Left cardiac atrium (tissue), 4 donors: ENCODE measurements at regions of chr21 and their contacts with region 1.

Region 1: DNA sequence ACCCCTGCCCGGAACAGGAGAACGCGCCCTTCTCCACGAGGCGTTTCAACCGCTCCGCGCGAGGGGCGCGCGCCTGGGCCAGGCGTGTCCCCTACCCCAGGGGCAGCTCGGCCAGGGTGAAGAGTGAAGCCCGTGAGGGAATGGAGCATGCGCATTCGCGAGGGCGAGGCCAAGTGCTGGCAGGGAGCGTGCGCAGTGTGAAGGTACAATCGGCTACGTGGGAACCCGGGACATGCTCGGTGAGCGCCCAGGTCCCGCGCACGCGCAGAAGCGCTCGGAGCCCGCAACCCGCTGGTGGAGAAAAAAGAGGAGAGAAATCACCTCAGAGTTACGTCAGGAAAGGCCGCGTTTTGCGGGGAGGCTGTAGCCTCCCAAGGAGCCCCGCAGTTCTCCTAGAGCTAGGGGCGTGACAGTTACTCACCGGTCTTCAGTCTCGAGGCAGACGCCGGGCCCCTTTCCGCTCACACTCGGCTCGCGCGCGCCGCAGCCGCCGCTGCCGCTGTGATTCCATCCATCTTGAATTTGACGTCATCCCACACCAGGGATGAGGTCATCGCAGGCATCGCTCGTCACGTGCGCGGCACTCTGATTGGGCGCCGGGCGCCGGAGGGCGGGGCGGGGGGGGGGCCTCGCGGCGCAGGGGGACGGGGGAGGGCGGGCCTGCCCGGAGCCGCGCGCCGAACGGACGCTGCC is at the start of gene ZBTB21:
- DNase-seq: peak; percentile 99
- ATAC-seq: peak; percentile 95 to 97
- total RNA-seq, gene ZBTB21: 5.7 to 14.7 TPM

Region 2: GRCh38 chr21:41885341-41886029 is 124.5 kb before region 1 on chr21:
- intact Hi-C with region 1: loop called in 1 of 2 experiments (anchors 10 kb)
- DNase-seq: no peak
- ATAC-seq: no peak

Region 3: DNA sequence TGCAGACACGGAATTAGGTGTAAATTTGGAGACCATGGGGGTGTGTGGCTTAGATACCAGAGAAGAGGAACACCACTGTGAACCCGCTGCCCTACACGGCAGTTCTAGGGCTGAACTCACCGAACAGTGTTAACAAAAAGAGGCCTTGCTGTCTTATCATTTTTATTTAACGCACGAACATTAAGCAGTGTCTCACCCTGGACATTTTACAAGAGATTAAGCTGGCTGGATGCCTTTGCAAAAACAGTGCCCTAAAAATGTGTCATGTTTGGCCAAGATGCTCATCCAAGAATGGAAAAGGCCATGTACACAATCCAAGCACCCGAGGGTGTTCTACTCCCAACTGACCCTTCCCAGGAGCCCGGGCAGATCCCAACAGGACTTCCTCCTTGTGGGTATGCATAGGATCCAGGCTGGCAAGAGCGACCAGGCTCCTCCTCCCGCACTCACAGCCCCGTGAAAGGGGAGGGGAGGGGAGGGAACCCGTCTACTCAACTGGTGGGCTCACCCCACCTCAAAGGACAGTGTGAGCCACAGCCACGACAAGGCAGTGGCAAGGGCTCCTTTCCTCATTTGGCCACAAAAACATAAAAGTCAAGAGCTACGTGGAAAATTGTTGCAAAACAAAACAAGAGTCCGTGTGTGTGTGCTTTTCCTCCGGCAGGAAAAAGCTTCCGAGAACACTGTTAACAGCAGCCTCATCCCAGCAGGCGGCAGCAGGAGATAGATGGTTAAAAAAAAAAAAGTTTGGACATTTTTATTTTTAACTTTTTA is 76.5 kb before region 1 on chr21:
- intact Hi-C with region 1: loop called in 1 of 2 experiments (anchors 5 kb)
- DNase-seq: peak; percentile 48
- ATAC-seq: peak; percentile 53 to 73

Region 4: GRCh38 chr21:42062236-42063022 is 52.5 kb after region 1 on chr21:
- intact Hi-C with region 1: no loop called
- DNase-seq: no peak
- ATAC-seq: peak; percentile 50 to 72

Region 5: DNA sequence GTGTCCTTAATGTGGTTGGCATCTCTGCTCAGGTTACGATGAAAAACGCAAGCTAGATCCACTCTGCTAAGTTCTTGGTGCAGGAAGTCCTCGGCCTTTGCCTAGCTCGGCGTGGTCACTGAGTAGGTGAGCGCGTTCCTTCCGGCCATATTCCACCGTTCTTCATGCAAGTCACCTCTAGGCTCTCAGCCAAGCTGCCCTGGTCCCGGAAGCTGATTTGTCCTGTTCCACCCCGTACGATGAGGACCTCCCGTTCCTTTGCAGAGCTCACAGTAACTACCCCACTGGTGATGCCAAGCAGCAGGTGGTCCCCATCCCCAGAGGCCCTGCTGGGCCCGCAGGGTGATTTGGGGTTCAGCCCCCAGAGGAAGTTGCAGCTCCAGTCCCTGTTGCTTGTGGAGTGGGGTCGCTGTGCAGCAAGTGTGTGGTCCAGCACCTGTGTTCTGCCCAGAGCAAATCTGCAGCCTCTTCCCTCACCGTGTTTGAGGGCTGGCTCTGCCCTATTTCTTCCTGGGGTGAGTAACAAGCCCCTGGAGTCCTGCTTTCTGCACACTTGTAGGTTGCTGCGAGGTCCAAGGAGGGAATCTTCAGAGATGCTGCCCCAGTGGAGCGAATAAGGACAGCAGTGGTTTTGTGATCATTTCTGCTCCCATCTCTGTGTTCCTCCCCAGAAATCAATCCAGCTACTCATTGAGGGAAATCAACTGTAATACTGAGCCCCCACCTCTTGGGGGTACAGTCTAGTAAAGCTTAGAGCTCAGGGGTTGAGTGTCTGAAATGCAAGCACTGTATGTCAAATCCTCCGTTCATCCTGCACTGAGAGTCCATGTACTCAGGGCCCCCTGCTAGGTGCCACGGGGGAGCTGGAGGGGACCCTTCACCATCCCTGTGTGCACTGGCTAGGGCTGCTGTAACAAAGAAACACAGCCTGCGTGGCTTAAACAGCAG is 63.4 kb after region 1 on chr21:
- intact Hi-C with region 1: no loop called
- DNase-seq: no peak
- ATAC-seq: no peak

Region 6: GRCh38 chr21:42107881-42108553 is 98.0 kb after region 1 on chr21:
- intact Hi-C with region 1: loop called (anchors 5 to 10 kb)
- DNase-seq: peak; percentile 67
- ATAC-seq: peak; percentile 93 to 94

Region 7: GRCh38 chr21:42117229-42117966 is 107.4 kb after region 1 on chr21:
- intact Hi-C with region 1: loop called in 1 of 2 experiments (anchors 10 kb)
- DNase-seq: peak; percentile 74
- ATAC-seq: peak; percentile 84 to 86